ENCODE measurements at regions of chr7 and their contacts with region 1.

Region 1: GRCh38 chr7:142782922-142783900 is 12.4 kb downstream of the PRSS2 start:
- DNase-seq: peak; percentile 91
- ATAC-seq: peak; percentile 82
- H3K4me3 Mint-ChIP-seq: peak overlapping the region; percentile 66
- H3K27ac Mint-ChIP-seq: no peak overlapping the region
- H3K4me1 Mint-ChIP-seq: peaks cover 7% of the 10 kb centered on the region
- H3K27me3 Mint-ChIP-seq: 0 out of 2 replicates have a peak, but pooled peaks cover 6% of the 10 kb centered on the region
- CTCF ChIP-seq: peak; percentile 93

Region 2: DNA sequence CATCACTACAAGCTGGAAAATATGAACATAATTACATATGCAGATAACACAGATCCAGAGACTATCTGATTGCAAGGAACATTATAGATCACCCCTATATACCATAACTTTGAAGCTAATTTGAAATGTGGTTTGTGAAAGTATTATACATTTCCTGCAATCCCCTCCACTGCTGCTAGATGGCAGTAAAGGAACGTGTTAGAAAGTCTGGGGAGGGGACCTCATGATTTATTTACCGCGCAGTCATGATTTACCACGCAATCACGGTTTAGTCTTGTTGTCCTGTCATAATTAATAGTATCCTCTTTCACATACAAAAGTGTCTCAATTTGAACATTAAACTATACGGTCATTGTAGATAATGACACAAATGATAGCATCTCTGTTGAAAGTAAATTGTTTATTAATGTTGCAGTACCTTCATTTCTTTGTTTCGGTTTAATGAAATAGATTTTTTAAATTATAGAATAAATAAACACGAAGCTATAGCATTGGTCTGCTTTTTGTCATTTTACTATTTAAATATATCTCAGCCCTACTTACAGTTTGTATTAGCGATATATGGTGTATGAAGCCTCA is 179.3 kb before region 1 on chr7:
- CTCF ChIA-PET with region 1: interaction called, 39 read pairs
- POLR2A ChIA-PET with region 1: no interaction called
- DNase-seq: peak; percentile 60
- ATAC-seq: peak; percentile 55
- H3K4me3 Mint-ChIP-seq: no peak overlapping the region
- H3K27ac Mint-ChIP-seq: no peak overlapping the region
- H3K4me1 Mint-ChIP-seq: 0 out of 2 replicates have a peak, but pooled peaks cover 2% of the 10 kb centered on the region
- H3K27me3 Mint-ChIP-seq: no peaks in the 10 kb centered on the region; the same call in 1 of the 2 replicates
- CTCF ChIP-seq: peak; percentile 42; the same call in 1 of the 2 replicates

Region 3: DNA sequence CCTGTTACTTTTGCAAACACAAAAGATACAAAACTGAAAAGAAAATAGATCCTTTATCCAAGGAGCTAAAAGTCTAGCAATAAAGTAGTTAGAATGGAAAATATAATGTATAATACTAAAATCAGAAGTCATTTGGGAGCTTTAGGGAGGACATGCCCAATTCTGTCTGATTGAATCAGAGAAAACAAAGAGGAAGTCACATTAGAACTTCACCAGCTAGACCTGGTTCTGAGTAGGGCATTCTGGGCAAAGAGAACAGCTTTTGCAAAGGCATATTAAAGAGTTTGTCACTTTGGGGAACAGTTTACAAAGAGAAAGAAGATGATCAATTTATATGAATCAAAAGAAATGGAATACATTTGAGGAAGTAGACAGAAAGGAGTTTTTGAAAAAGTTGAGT is 140.9 kb before region 1 on chr7:
- CTCF ChIA-PET with region 1: interaction called, 174 read pairs
- POLR2A ChIA-PET with region 1: no interaction called
- DNase-seq: no peak
- ATAC-seq: no peak
- H3K4me3 Mint-ChIP-seq: no peak overlapping the region
- H3K27ac Mint-ChIP-seq: no peak overlapping the region
- H3K4me1 Mint-ChIP-seq: no peaks in the 10 kb centered on the region
- H3K27me3 Mint-ChIP-seq: no peaks in the 10 kb centered on the region
- CTCF ChIP-seq: no peak

Region 4: DNA sequence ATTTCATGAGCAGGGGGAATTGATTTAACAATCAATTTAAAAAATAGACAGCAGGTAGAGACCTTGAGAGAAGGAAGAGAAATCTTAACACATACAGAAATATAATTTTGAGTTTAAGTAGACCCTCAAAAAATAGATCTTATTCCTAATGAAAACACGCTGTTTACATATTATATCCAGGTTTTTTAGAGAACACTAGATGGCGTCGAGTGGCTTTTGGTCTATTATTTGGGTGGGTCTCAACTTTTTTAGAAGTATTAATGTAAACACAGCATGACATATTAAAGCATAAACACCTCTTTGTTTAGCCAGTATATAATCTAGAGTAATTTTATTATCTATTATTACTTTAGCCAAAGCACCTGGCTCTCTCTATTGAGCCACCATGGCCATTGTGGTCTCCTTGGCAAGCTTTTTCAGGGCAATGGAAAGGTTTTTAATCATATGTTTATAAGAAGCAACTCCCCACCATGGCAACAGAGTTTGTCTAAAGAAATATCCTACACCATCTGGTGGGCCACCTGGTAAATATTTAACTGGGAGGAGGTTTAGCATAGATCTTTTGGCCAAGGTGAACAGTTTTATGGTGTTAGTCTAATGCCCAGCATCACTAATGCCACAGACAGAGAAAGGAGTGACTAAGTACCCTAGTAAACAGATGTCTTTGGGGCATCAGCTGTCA is 93.6 kb before region 1 on chr7:
- CTCF ChIA-PET with region 1: interaction called, 20 read pairs
- POLR2A ChIA-PET with region 1: no interaction called
- DNase-seq: no peak
- ATAC-seq: no peak
- H3K4me3 Mint-ChIP-seq: no peak overlapping the region
- H3K27ac Mint-ChIP-seq: no peak overlapping the region
- H3K4me1 Mint-ChIP-seq: peaks cover 11% of the 10 kb centered on the region
- H3K27me3 Mint-ChIP-seq: no peaks in the 10 kb centered on the region
- CTCF ChIP-seq: no peak

Region 5: GRCh38 chr7:142811154-142811737 is 28.0 kb after region 1 on chr7:
- CTCF ChIA-PET with region 1: interaction called, 94 read pairs
- POLR2A ChIA-PET with region 1: no interaction called
- DNase-seq: no peak
- ATAC-seq: peak; percentile 22
- H3K4me3 Mint-ChIP-seq: no peak overlapping the region
- H3K27ac Mint-ChIP-seq: no peak overlapping the region; the same call in 1 of the 2 replicates
- H3K4me1 Mint-ChIP-seq: peaks cover 60% of the 10 kb centered on the region
- H3K27me3 Mint-ChIP-seq: peaks cover 12% of the 10 kb centered on the region
- CTCF ChIP-seq: peak; percentile 60